ENCODE measurements at regions of chr20 and their contacts with region 1.

Region 1: DNA sequence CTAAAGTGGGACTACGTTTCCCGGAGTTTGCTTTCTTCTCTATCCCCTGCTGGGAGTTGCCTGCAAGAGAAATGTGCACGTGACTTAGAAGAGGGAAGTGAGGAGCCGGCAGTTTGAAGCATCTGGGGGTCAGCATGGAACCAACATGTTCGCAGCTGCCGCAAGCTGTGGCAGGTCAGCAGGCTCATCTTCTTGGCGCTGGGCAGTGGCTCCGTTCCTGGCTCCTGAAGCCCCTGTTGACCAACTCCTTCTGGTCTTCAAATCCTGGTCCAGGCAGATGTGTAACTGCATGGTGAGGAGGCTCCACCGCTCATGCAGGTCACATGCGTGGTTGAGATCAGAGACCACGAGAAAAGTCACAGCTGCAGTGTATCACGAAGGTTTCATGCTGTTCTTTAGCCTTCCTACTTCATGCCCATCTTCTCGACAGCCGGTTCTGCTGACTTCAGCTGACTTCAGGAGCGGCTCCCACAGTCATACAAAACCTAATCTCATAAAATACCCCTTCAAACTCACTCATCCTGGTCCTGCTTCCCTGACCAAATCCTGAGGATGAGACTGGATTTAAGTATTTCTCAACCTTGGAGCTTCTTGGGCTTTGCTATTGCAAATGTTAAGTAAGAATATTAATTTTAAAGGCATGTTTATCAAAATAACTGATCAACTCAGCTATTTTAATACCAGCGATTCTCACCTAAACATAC is 44.9 kb upstream of the BCAS1 start:
- DNase-seq: no peak
- H3K4me3 ChIP-seq: no peak overlapping the region
- H3K27ac ChIP-seq: peak overlapping the region; percentile 88
- H3K27me3 ChIP-seq: no peaks in the 10 kb centered on the region
- CTCF ChIP-seq: no peak

Region 2: DNA sequence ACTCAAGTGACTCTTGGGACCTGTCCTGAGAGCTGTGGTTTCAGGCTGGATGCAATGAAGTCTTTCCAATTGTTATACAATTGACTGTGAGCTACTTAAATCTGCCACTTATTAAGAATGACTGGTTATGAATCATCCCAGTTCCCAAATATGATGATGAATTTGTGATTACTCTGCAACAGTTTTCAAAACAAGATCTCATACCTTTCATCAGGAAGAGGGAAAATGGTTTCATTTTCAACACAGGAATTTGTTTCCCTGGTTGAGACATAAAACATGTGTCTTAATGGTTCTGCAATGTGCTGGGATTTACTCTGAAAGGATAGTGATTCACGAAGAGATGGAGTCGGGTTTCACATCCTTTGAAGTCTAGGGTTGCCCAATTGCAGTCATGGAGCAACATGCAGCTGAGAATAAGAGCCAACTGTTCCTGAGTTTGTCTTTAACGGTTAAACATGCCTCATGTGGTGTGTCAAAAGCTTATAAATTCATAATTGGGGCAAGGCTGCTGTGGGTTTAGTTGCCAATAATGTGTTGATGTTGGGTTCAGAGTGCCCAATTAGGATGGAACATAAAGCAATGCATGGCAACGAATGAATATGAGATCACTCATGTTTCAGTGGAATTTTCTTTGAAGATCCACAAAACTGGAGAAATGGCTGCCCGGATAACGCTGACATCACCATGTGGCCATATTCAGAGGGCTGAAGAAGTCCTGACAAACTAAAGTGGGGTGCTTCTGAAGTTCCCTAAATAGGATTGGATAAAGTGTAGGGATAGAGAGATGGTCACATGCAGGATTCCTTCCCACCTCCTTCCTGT is 17.5 kb after region 1 on chr20:
- CTCF ChIA-PET with region 1: interaction called, 3 read pairs
- POLR2A ChIA-PET with region 1: interaction called, 26 read pairs
- DNase-seq: peak; percentile 94
- H3K4me3 ChIP-seq: no peak overlapping the region
- H3K27ac ChIP-seq: peak overlapping the region; percentile 86
- H3K27me3 ChIP-seq: no peaks in the 10 kb centered on the region
- CTCF ChIP-seq: no peak

Region 3: GRCh38 chr20:54456435-54456834 is 341.1 kb after region 1 on chr20:
- CTCF ChIA-PET with region 1: no interaction called
- POLR2A ChIA-PET with region 1: no interaction called
- DNase-seq: no peak
- H3K4me3 ChIP-seq: no peak overlapping the region
- H3K27ac ChIP-seq: no peak overlapping the region
- H3K27me3 ChIP-seq: no peaks in the 10 kb centered on the region
- CTCF ChIP-seq: no peak

Region 4: GRCh38 chr20:54726768-54727422 is 611.6 kb after region 1 on chr20:
- CTCF ChIA-PET with region 1: no interaction called
- POLR2A ChIA-PET with region 1: no interaction called
- DNase-seq: no peak
- H3K4me3 ChIP-seq: no peak overlapping the region
- H3K27ac ChIP-seq: no peak overlapping the region
- H3K27me3 ChIP-seq: no peaks in the 10 kb centered on the region
- CTCF ChIP-seq: no peak